Activated CD4-positive, alpha-beta T cell treated with anti-CD3 and anti-CD28 coated beads for 36 hours (primary cell): ENCODE measurements at regions of chr10 and their contacts with region 1.

Region 1: DNA sequence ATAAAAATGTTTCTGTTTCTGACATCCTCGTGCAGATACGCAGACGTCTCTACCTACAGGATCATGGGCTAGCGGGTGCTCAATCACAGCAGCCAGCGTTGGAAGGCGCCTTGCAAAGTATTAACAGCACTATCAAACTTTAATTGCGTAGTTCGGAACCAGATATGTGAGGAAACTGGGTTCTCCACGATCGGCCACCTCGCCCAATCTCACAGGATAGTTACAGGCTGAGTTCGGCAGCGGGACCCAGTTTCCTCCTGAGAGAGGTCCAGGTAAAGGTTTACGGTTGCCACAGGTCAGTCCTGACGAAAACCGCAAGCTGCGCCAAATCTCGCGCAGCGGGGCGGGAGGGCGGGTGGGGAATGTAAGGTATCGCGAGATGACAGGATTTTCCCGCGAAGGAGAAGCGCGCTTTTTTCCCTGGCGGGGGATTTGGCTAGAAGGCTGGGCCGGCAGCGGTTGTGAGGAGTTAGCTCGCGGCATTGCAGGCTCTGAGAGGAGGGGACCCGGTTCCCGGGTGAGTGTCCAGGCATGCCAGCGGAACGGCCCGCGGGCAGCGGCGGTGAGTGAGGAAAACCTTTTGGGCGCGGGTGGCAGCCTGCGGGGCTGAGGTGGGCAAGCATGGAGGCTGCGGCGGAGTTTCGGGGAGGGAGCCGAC is at the start of gene HELLS:
- DNase-seq: peak; percentile 88
- ATAC-seq: peak; percentile 86
- H3K4me3 Mint-ChIP-seq: peak within 1 kb of the TSS; percentile 100
- H3K27ac Mint-ChIP-seq: peak within 1 kb of the TSS; percentile 99
- H3K4me1 Mint-ChIP-seq: peaks cover 11% of the 10 kb centered on the region
- H3K27me3 Mint-ChIP-seq: no peaks in the 10 kb centered on the region
- total RNA-seq, gene HELLS: 118 to 154 TPM

Region 2: DNA sequence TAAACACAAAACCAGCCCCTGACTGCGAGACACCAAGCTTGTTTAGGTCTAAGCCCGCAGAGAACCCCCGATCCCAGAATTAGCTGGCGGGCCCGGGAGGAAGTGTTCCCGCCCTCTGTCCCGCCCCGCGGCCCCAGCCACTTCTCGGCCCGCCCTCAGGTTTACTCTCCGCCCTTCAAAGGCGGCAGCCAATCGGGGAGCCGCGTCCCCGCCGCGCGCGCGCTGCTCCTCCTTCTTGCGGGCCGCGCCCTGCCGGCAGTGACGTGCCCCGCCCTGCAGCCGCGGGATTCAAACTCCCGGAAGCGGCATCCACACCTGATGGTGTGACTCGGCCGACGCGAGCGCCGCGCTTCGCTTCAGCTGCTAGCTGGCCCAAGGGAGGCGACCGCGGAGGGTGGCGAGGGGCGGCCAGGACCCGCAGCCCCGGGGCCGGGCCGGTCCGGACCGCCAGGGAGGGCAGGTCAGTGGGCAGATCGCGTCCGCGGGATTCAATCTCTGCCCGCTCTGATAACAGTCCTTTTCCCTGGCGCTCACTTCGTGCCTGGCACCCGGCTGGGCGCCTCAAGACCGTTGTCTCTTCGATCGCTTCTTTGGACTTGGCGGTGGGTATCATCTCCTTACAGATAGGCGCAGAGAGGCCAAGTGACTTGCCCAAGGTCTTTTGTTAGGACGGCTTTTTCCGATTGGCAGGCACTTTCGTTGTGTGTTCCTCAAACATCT is 1049.0 kb before region 1 on chr10 and contains the start of gene CEP55:
- CTCF ChIA-PET with region 1: no interaction called
- POLR2A ChIA-PET with region 1: no interaction called
- intact Hi-C with region 1: loop called in 1 of 2 experiments (anchors 5 kb)
- DNase-seq: peak; percentile 98
- ATAC-seq: peak; percentile 99
- H3K4me3 Mint-ChIP-seq: peak within 1 kb of the TSS; percentile 78
- H3K27ac Mint-ChIP-seq: peak within 1 kb of the TSS; percentile 84
- H3K4me1 Mint-ChIP-seq: peaks cover 25% of the 10 kb centered on the region
- H3K27me3 Mint-ChIP-seq: peaks cover 2% of the 10 kb centered on the region
- total RNA-seq, gene CEP55: 67.8 to 76.0 TPM

Region 3: DNA sequence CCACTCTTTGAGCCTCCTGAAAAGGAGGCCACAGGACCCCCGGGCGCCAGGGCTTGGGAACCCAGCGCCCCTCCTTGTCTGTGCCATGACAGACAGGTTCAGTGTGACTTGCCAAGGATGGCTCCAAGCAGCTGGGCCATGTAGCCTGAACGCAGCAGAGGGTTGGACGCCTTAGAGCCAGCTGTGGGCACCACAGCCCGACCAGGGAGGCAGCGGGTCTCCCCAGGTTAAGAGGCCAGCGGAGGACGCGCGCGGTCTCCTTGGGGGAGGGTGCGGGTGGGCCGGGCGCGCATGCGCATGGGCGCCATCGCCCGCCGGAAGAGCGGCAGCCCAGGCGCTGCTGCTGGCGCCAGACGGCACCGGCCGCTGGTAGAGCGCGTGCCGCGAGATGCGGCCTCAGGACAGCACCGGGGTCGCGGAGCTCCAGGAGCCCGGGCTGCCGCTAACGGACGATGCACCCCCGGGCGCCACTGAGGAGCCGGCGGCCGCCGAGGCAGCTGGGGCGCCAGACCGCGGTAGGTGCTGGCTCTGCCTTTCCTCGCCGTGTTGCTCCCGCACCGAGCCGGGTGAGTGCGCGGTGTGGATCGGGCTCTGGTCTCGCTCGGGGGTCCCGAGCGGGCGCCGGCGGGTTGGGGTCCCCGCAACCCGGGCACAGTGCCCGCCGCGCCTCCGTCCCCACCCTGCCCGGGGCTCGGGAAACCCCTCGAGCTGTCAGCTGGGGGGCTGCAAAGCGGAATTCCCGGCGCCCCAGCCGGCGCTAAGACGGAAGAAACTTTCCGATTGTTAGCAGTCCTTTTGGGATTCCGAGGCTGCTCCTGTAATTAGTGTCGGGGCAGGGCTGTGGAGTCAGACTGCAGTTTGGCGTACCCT is 651.6 kb before region 1 on chr10 and contains the start of gene SLC35G1:
- CTCF ChIA-PET with region 1: no interaction called
- POLR2A ChIA-PET with region 1: no interaction called
- intact Hi-C with region 1: loop called in 1 of 2 experiments (anchors 5 kb)
- DNase-seq: peak; percentile 84
- ATAC-seq: peak; percentile 94
- H3K4me3 Mint-ChIP-seq: peak within 1 kb of the TSS; percentile 77
- H3K27ac Mint-ChIP-seq: peak within 1 kb of the TSS; percentile 72
- H3K4me1 Mint-ChIP-seq: peaks cover 37% of the 10 kb centered on the region
- H3K27me3 Mint-ChIP-seq: peaks cover 14% of the 10 kb centered on the region
- total RNA-seq, gene SLC35G1: 3.6 to 4.1 TPM

Region 4: GRCh38 chr10:94490789-94491039 is 54.8 kb before region 1 on chr10:
- CTCF ChIA-PET with region 1: no interaction called
- POLR2A ChIA-PET with region 1: no interaction called
- intact Hi-C with region 1: no loop called
- DNase-seq: no peak
- ATAC-seq: no peak
- H3K4me3 Mint-ChIP-seq: no peak overlapping the region
- H3K27ac Mint-ChIP-seq: no peak overlapping the region
- H3K4me1 Mint-ChIP-seq: no peaks in the 10 kb centered on the region
- H3K27me3 Mint-ChIP-seq: no peaks in the 10 kb centered on the region

Region 5: GRCh38 chr10:94591461-94592205 is 46.1 kb after region 1 on chr10:
- CTCF ChIA-PET with region 1: no interaction called
- POLR2A ChIA-PET with region 1: interaction called, 3 read pairs
- intact Hi-C with region 1: loop called (anchors 5 kb)
- DNase-seq: no peak
- ATAC-seq: peak; percentile 85
- H3K4me3 Mint-ChIP-seq: peak overlapping the region; percentile 30
- H3K27ac Mint-ChIP-seq: peak overlapping the region; percentile 58
- H3K4me1 Mint-ChIP-seq: peaks cover 17% of the 10 kb centered on the region
- H3K27me3 Mint-ChIP-seq: no peaks in the 10 kb centered on the region

Region 6: DNA sequence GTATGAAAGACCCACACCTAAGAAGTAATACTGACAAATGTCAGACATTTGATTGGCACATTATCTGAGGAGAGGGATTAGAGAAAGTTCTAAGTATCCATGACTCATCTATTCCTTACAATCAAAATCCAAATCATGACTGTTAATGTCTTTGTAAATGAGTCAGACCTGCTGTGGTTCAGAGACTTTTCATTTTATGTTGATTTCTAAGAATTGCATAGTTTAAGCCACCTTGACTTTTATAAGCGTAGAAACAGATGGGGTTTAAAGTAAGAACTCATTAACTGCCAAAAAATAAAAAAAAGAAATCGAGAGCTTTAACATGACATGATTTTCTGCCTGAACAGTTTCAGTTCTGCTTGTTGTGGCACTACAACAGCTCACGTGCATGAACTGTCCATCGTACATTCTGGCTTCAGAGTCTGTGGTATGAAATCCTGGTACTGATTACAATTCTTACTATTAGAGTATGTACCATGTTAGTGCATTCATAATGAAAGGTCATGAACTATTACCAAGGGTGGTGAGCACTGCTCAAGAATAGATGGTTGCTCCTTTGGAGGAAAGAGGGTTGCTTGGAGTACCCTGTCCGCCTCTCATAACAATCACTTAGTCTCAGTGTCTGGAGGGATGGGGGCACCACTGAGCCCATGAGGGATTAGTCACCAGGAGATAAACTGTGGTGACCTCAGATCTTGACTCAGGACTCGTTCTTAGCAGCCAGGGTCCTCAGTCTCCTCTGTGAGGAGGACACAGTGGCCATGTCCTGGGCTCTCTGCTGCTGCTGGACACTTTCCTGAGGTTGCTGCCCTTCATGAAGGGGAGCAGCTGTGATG is 690.8 kb after region 1 on chr10:
- CTCF ChIA-PET with region 1: no interaction called
- POLR2A ChIA-PET with region 1: no interaction called
- intact Hi-C with region 1: loop called (anchors 5 to 10 kb)
- DNase-seq: peak; percentile 56
- ATAC-seq: peak; percentile 87
- H3K4me3 Mint-ChIP-seq: peak overlapping the region; percentile 19
- H3K27ac Mint-ChIP-seq: peak overlapping the region; percentile 85
- H3K4me1 Mint-ChIP-seq: peaks cover 29% of the 10 kb centered on the region
- H3K27me3 Mint-ChIP-seq: peaks cover 15% of the 10 kb centered on the region